Endothelial cell of umbilical vein (primary cell): ENCODE measurements at regions of chr12 and their contacts with region 1.

Region 1: GRCh38 chr12:52121824-52122539 is 42.5 kb downstream of the SMIM41 start:
- DNase-seq: peak; percentile 33
- H3K4me3 ChIP-seq: no peak overlapping the region
- H3K27ac ChIP-seq: no peak overlapping the region
- H3K4me1 ChIP-seq: peaks cover 21% of the 10 kb centered on the region
- H3K27me3 ChIP-seq: peaks cover 0 to 1% of the 10 kb centered on the region in 2 experiments
- CTCF ChIP-seq: peak; percentile 58 to 87
- POLR2A ChIP-seq: no peak

Region 2: GRCh38 chr12:52082988-52083637 is 38.9 kb before region 1 on chr12:
- CTCF ChIA-PET with region 1: interaction called, 19 read pairs
- POLR2A ChIA-PET with region 1: no interaction called
- dilution Hi-C with region 1: no loop called
- intact Hi-C with region 1: loop called (anchors 1 kb)
- DNase-seq: peak; percentile 64
- H3K4me3 ChIP-seq: no peak overlapping the region
- H3K27ac ChIP-seq: no peak overlapping the region
- H3K4me1 ChIP-seq: peaks cover 5% of the 10 kb centered on the region
- H3K27me3 ChIP-seq: no peaks in the 10 kb centered on the region
- CTCF ChIP-seq: peak; percentile 96 to 98
- POLR2A ChIP-seq: no peak

Region 3: GRCh38 chr12:52139552-52140062 is 17.6 kb after region 1 on chr12:
- CTCF ChIA-PET with region 1: interaction called, 19 read pairs
- POLR2A ChIA-PET with region 1: no interaction called
- dilution Hi-C with region 1: no loop called
- intact Hi-C with region 1: no loop called
- DNase-seq: no peak
- H3K4me3 ChIP-seq: no peak overlapping the region
- H3K27ac ChIP-seq: no peak overlapping the region
- H3K4me1 ChIP-seq: no peaks in the 10 kb centered on the region
- H3K27me3 ChIP-seq: peaks cover 4% of the 10 kb centered on the region in 2 experiments
- CTCF ChIP-seq: peak; percentile 69 to 71
- POLR2A ChIP-seq: no peak

Region 4: GRCh38 chr12:52147367-52147972 is 25.5 kb after region 1 on chr12:
- CTCF ChIA-PET with region 1: interaction called, 16 read pairs
- POLR2A ChIA-PET with region 1: no interaction called
- dilution Hi-C with region 1: no loop called
- intact Hi-C with region 1: loop called (anchors 1 kb)
- DNase-seq: peak; percentile 91
- H3K4me3 ChIP-seq: no peak overlapping the region
- H3K27ac ChIP-seq: peak overlapping the region; percentile 98
- H3K4me1 ChIP-seq: peaks cover 23% of the 10 kb centered on the region
- H3K27me3 ChIP-seq: no peaks in the 10 kb centered on the region
- CTCF ChIP-seq: no peak
- POLR2A ChIP-seq: peak; percentile 65

Region 5: GRCh38 chr12:52221912-52222457 is 100.0 kb after region 1 on chr12:
- CTCF ChIA-PET with region 1: no interaction called
- POLR2A ChIA-PET with region 1: no interaction called
- dilution Hi-C with region 1: no loop called
- intact Hi-C with region 1: no loop called
- DNase-seq: peak; percentile 44
- H3K4me3 ChIP-seq: no peak overlapping the region
- H3K27ac ChIP-seq: no peak overlapping the region
- H3K4me1 ChIP-seq: peaks cover 11% of the 10 kb centered on the region
- H3K27me3 ChIP-seq: no peaks in the 10 kb centered on the region
- CTCF ChIP-seq: peak; percentile 70 to 78
- POLR2A ChIP-seq: no peak

Region 6: GRCh38 chr12:53005986-53006809 is 884.2 kb after region 1 on chr12 and contains the start of gene EIF4B:
- CTCF ChIA-PET with region 1: no interaction called
- POLR2A ChIA-PET with region 1: no interaction called
- dilution Hi-C with region 1: no loop called
- intact Hi-C with region 1: loop called (anchors 10 kb)
- DNase-seq: peak; percentile 100
- H3K4me3 ChIP-seq: peak within 1 kb of the TSS; percentile 81 to 92 (median 85)
- H3K27ac ChIP-seq: peak within 1 kb of the TSS; percentile 78
- H3K4me1 ChIP-seq: peaks cover 36% of the 10 kb centered on the region
- H3K27me3 ChIP-seq: no peaks in the 10 kb centered on the region
- CTCF ChIP-seq: no peak
- POLR2A ChIP-seq: peak; percentile 80
- total RNA-seq, gene EIF4B: 372 and 382 TPM in 2 replicates